GM12878 (cell line): ENCODE measurements at regions of chr5 and their contacts with region 1.

Region 1: GRCh38 chr5:112976432-112977309 is at the start of gene DCP2:
- DNase-seq: peak; percentile 99
- ATAC-seq: peak; percentile 97
- H3K4me3 ChIP-seq: peak within 1 kb of the TSS; percentile 97
- H3K27ac ChIP-seq: peak within 1 kb of the TSS; percentile 88
- H3K4me1 ChIP-seq: no peaks in the 10 kb centered on the region; the same call in 1 of the 2 replicates
- H3K27me3 ChIP-seq: no peaks in the 10 kb centered on the region
- CTCF ChIP-seq: no peak
- EP300 ChIP-seq: no peak
- POLR2A ChIP-seq: peak; percentile 97
- RAD21 ChIP-seq: no peak
- polyA plus RNA-seq, gene DCP2: 23.4 to 25.3 TPM

Region 2: GRCh38 chr5:112707187-112708102 is 269.2 kb before region 1 on chr5:
- CTCF ChIA-PET with region 1: no interaction called
- POLR2A ChIA-PET with region 1: no interaction called
- RAD21 ChIA-PET with region 1: no interaction called
- SMC1A ChIA-PET with region 1: no interaction called
- in situ Hi-C with region 1: no loop called
- intact Hi-C with region 1: loop called (anchors 5 kb)
- DNase-seq: peak; percentile 97
- ATAC-seq: peak; percentile 92
- H3K4me3 ChIP-seq: peak overlapping the region; percentile 85
- H3K27ac ChIP-seq: peak overlapping the region; percentile 79
- H3K4me1 ChIP-seq: peaks cover 3% of the 10 kb centered on the region; the same call in 1 of the 2 replicates
- H3K27me3 ChIP-seq: no peaks in the 10 kb centered on the region
- CTCF ChIP-seq: no peak
- EP300 ChIP-seq: no peak
- POLR2A ChIP-seq: peak; percentile 94
- RAD21 ChIP-seq: no peak

Region 3: GRCh38 chr5:112930082-112930344 is 46.7 kb before region 1 on chr5:
- CTCF ChIA-PET with region 1: interaction called, 5 read pairs
- POLR2A ChIA-PET with region 1: interaction called, 20 read pairs
- RAD21 ChIA-PET with region 1: interaction called, 7 read pairs
- SMC1A ChIA-PET with region 1: interaction called, 24 read pairs
- in situ Hi-C with region 1: no loop called
- intact Hi-C with region 1: no loop called
- DNase-seq: peak; percentile 84
- ATAC-seq: peak; percentile 69
- H3K4me3 ChIP-seq: no peak overlapping the region
- H3K27ac ChIP-seq: peak overlapping the region; percentile 85
- H3K4me1 ChIP-seq: peaks cover 56% of the 10 kb centered on the region
- H3K27me3 ChIP-seq: no peaks in the 10 kb centered on the region
- CTCF ChIP-seq: no peak
- EP300 ChIP-seq: peak; percentile 28 to 70; a peak in 1 of 4 replicates
- POLR2A ChIP-seq: no peak
- RAD21 ChIP-seq: no peak

Region 4: DNA sequence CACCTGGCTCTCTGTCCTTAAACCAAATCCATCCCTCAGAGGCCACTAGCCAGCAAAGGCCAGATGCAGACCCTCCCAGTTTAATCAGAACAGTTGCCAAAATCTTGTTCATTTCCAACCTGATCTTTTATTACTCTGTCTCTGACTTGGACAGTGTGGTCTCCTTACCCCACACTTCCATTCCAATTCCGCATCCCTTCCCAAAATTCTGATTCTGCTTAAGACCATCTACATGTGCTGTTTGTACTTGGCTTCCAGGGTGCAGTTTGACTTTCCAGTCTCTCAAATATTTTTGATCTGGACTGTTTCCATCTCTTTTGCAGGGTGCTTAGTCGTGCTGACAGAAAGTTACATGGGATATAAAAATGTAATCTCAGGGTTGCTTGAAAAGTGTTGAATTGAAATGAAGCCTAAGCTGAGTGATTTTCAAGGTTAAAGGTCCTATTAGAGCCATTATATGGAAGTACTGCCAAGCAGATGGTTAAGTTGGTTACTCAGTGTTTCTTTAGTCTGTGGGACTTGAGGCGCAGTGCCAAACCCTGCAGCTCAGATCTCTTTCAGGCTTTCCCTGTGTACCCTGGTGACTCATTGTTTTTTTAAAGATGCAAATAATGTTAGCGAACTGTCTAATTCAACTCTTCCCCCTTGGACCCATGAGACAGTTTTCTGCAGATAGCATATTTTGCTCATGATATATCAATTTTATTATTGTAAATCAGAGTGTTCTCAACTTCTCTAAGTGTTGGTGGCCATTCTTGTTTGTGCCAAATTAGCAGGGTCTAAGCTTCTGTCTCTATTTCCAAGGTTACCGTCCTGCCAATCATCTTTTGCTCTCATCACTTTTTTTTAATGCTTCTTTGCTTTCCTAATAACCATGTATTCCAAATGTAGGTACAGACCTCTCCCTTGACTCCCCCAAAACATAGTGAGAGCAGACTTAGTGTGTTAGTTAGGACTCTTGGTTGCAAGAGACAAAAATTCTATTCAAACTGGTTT is 18.3 kb before region 1 on chr5:
- CTCF ChIA-PET with region 1: interaction called, 5 read pairs
- POLR2A ChIA-PET with region 1: interaction called, 6 read pairs
- RAD21 ChIA-PET with region 1: interaction called, 12 read pairs
- SMC1A ChIA-PET with region 1: interaction called, 34 read pairs
- in situ Hi-C with region 1: no loop called
- intact Hi-C with region 1: no loop called
- DNase-seq: peak; percentile 57
- ATAC-seq: peak; percentile 83
- H3K4me3 ChIP-seq: 0 out of 2 replicates have a peak overlapping the region, but pooled peaks have one; percentile 25
- H3K27ac ChIP-seq: no peak overlapping the region; the same call in 1 of the 2 replicates
- H3K4me1 ChIP-seq: peaks cover 29% of the 10 kb centered on the region
- H3K27me3 ChIP-seq: no peaks in the 10 kb centered on the region
- CTCF ChIP-seq: no peak
- EP300 ChIP-seq: no peak
- POLR2A ChIP-seq: no peak
- RAD21 ChIP-seq: no peak

Region 5: GRCh38 chr5:113519412-113519811 is 542.7 kb after region 1 on chr5:
- CTCF ChIA-PET with region 1: no interaction called
- POLR2A ChIA-PET with region 1: interaction called, 3 read pairs
- RAD21 ChIA-PET with region 1: interaction called, 4 read pairs
- SMC1A ChIA-PET with region 1: no interaction called
- in situ Hi-C with region 1: no loop called
- intact Hi-C with region 1: loop called (anchors 5 kb)
- DNase-seq: no peak
- ATAC-seq: no peak
- H3K4me3 ChIP-seq: no peak overlapping the region
- H3K27ac ChIP-seq: no peak overlapping the region
- H3K4me1 ChIP-seq: peaks cover 16% of the 10 kb centered on the region
- H3K27me3 ChIP-seq: no peaks in the 10 kb centered on the region
- CTCF ChIP-seq: no peak
- EP300 ChIP-seq: no peak
- POLR2A ChIP-seq: no peak
- RAD21 ChIP-seq: no peak

Region 6: DNA sequence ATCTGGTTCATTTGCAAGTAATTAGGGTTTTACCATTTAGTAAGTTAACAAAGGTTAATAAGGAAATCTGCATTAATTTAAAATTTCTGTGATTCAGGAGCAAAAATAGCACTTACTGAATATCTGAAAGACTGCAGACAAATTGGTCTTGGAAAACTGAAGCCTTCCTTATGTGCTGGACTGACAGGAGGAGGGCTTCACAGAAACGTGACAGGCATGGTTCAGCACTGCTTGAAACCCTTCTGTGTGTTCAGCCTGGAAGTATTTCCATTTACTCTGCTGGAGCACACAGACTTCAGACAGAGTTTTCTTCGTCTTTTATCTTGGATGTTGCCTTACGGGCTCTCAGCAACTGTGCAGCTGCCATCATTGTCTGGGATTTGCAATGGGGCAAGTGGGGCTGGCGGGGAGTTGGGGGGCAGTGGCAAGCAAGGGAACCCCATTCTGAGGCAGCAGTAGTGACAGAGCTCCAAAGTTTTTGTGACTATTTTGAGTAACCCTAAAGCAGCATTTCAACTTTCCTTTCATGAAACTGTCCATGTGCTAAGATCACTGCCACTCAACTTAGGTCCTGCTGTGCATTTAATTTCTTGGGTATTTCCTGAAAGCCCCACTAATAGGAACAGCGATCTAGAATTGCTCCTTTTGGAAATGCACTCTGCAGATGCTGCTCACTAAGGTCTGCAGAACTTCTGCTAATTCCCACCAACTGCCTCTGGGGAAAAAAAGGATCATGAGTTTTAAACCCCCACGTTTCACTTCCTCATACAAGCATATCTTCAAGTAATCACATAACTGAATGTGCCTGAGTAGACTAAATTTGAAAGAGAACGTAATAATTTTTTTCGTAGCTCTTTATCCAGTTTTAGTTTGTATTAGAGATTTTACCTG is 1441.8 kb after region 1 on chr5:
- CTCF ChIA-PET with region 1: no interaction called
- POLR2A ChIA-PET with region 1: no interaction called
- RAD21 ChIA-PET with region 1: no interaction called
- SMC1A ChIA-PET with region 1: no interaction called
- in situ Hi-C with region 1: loop called (anchors 25 kb)
- intact Hi-C with region 1: no loop called
- DNase-seq: peak; percentile 56
- ATAC-seq: peak; percentile 91
- H3K4me3 ChIP-seq: 0 out of 2 replicates have a peak overlapping the region, but pooled peaks have one; percentile 3
- H3K27ac ChIP-seq: peak overlapping the region; percentile 43; the same call in 1 of the 2 replicates
- H3K4me1 ChIP-seq: no peaks in the 10 kb centered on the region
- H3K27me3 ChIP-seq: no peaks in the 10 kb centered on the region
- CTCF ChIP-seq: no peak
- EP300 ChIP-seq: peak; percentile 94 to 96
- POLR2A ChIP-seq: no peak
- RAD21 ChIP-seq: peak; percentile 24; the same call in 1 of the 2 replicates